Activated CD8-positive, alpha-beta T cell treated with anti-CD3 and anti-CD28 coated beads for 36 hours (primary cell): ENCODE measurements at regions of chr11 and their contacts with region 1.

Region 1: GRCh38 chr11:19539861-19540260 is 172.8 kb upstream of the NAV2 start:
- DNase-seq: no peak
- ATAC-seq: no peak
- H3K4me3 Mint-ChIP-seq: no peak overlapping the region
- H3K27ac Mint-ChIP-seq: no peak overlapping the region
- H3K4me1 Mint-ChIP-seq: no peaks in the 10 kb centered on the region
- H3K27me3 Mint-ChIP-seq: peaks cover 3% of the 10 kb centered on the region
- CTCF ChIP-seq: no peak

Region 2: DNA sequence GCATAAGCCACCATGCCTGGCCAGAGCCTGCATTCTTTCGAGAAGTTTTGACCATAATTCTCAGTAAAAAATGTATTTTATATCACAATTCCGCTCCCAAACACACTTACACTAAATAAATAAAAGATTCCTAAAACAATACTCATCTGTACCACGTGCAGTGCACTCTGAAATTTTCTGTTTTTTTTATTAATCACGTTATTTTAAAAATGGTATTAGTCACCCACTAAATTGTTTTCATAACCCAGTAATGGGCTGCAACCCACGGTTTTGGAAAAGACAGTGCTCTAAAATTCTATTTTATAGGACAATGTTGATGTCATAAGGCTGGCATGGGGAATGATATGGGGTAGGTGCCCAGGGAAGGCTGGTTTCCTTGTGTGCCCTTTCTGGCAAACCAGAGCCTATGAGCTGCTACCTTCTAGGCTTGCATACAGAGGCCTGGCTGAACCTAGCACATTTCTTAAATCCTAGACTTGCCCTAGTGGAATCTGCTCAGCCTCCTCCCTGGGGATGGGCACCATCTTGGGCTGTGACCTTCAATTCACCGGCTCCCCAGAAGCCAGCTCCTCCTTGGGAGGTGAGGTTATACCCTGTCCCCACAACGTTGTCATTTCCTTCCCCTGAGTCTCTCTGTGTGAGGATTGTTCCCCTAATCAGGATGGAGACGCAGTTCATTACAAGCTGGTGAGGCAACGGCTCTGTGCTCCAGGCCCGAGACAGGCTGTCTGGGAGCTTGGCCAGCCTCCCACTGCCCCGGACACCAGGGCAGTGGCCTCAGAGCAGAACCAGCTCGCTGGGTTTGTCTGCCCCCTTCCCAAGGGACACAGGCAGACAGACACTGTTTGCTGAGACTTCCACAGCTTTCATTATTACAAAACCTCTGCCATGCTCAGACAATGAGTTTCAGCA is 56.2 kb after region 1 on chr11:
- CTCF ChIA-PET with region 1: no interaction called
- POLR2A ChIA-PET with region 1: no interaction called
- intact Hi-C with region 1: loop called (anchors 10 kb)
- DNase-seq: no peak
- ATAC-seq: no peak
- H3K4me3 Mint-ChIP-seq: no peak overlapping the region
- H3K27ac Mint-ChIP-seq: no peak overlapping the region
- H3K4me1 Mint-ChIP-seq: no peaks in the 10 kb centered on the region
- H3K27me3 Mint-ChIP-seq: peaks cover 5% of the 10 kb centered on the region
- CTCF ChIP-seq: no peak